ENCODE measurements at regions of chr14 and their contacts with region 1.

Region 1: GRCh38 chr14:88562831-88563686 is at the start of gene ZC3H14:
- DNase-seq: peak; percentile 86 to 88 (median 87)
- ATAC-seq: peak; percentile 96
- H3K4me3 ChIP-seq: peak within 1 kb of the TSS; percentile 90
- H3K27ac ChIP-seq: peak within 1 kb of the TSS; percentile 87
- H3K4me1 ChIP-seq: peaks cover 0 to 6% of the 10 kb centered on the region in 2 experiments; a peak in 4 of 5 replicates
- H3K27me3 ChIP-seq: no peaks in the 10 kb centered on the region
- CTCF ChIP-seq: no peak
- EP300 ChIP-seq: no peak
- POLR2A ChIP-seq: peak; percentile 82
- RAD21 ChIP-seq: no peak
- polyA plus RNA-seq, gene ZC3H14: 21.1 to 31.1 TPM

Region 2: GRCh38 chr14:87992718-87993628 is 570.1 kb before region 1 on chr14 and contains the start of gene GALC:
- CTCF ChIA-PET with region 1: no interaction called
- POLR2A ChIA-PET with region 1: no interaction called
- in situ Hi-C with region 1: loop called (anchors 25 kb)
- intact Hi-C with region 1: no loop called
- DNase-seq: peak; percentile 78 to 92 (median 80)
- ATAC-seq: peak; percentile 93
- H3K4me3 ChIP-seq: peak within 1 kb of the TSS; percentile 61
- H3K27ac ChIP-seq: peak within 1 kb of the TSS; percentile 69
- H3K4me1 ChIP-seq: peaks cover 13 to 31% of the 10 kb centered on the region in 2 experiments
- H3K27me3 ChIP-seq: no peaks in the 10 kb centered on the region
- CTCF ChIP-seq: peak in 1 of 3 experiments; percentile 16; a peak in 1 of 6 replicates
- EP300 ChIP-seq: peak; percentile 33; the same call in 1 of the 2 replicates
- POLR2A ChIP-seq: peak; percentile 67
- RAD21 ChIP-seq: peak in 1 of 2 experiments; percentile 9; a peak in 1 of 4 replicates
- polyA plus RNA-seq, gene GALC: 1.6 to 2.9 TPM

Region 3: DNA sequence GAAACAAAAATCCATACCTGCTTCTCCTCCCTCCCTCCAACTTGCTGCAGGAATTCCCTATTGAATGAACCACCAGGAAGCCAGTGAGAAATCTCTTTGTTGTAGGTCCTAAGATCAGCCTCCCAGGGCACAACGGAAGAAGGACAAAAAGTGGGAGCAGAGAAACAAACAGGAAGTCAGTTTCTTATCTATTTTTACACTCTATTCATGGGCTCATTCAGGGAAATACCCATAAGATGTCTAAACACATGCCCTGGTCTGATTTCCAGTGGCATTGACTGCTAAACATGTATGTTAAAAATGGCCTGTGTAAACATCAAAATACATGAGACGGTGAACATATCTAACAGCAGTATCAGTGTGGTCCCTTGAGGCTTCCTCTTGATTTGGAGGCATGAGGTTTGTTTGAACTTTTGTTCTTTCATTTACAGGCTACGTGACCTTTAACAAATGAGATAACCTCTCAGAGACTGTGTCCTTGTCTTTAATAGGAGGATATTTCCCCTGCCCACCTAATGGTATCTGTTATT is 539.3 kb before region 1 on chr14:
- CTCF ChIA-PET with region 1: no interaction called
- POLR2A ChIA-PET with region 1: no interaction called
- in situ Hi-C with region 1: no loop called
- intact Hi-C with region 1: loop called (anchors 5 kb)
- DNase-seq: peak in 2 of 4 experiments; percentile 7 to 21
- ATAC-seq: peak; percentile 63
- H3K4me3 ChIP-seq: no peak overlapping the region
- H3K27ac ChIP-seq: peak overlapping the region; percentile 36; the same call in 1 of the 3 replicates
- H3K4me1 ChIP-seq: peaks cover 0 to 40% of the 10 kb centered on the region in 2 experiments; a peak in 3 of 5 replicates
- H3K27me3 ChIP-seq: no peaks in the 10 kb centered on the region
- CTCF ChIP-seq: no peak
- EP300 ChIP-seq: peak; percentile 22; the same call in 1 of the 2 replicates
- POLR2A ChIP-seq: no peak
- RAD21 ChIP-seq: no peak

Region 4: DNA sequence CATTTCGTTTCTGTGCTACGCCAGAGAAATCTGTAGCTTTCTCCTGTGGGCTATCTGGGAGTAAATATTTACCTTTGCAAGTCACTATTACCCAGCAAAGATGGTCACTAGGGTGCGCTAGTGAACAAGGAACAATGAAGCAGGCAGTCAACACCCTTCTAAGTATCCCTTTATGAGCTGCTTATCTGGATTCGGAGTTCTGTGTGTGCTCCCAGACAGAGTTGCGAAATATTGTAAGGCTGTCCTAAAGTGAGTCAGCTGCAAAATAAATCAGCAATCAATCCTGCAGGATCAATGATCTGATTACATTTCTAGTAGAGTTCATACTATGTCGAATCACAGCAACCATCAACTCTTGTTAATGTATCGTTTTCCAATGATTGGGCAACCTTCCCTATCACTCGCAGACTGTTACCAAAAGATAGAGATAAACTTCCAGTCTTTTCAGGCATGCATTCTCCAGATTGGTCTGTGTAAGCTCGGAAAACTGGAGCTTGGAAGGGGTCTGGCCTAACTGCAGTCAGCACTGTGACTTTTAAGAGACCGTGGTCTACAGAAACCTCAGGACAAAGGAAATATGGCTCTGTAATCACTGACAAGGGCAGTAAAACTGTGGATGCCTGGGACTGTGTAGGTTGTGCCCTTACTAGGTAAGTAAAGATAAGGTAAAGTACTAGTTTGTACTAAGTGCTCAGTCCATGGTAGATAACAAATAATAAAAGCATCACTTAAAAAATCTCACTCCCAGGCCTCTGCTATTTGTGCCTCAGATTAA is 373.5 kb before region 1 on chr14:
- CTCF ChIA-PET with region 1: no interaction called
- POLR2A ChIA-PET with region 1: no interaction called
- in situ Hi-C with region 1: no loop called
- intact Hi-C with region 1: loop called (anchors 5 kb)
- DNase-seq: peak; percentile 26 to 80 (median 43)
- ATAC-seq: peak; percentile 96
- H3K4me3 ChIP-seq: no peak overlapping the region
- H3K27ac ChIP-seq: no peak overlapping the region
- H3K4me1 ChIP-seq: no peaks in the 10 kb centered on the region
- H3K27me3 ChIP-seq: peaks cover 5 to 24% of the 10 kb centered on the region in 2 experiments; a peak in 3 of 5 replicates
- CTCF ChIP-seq: peak; percentile 54 to 75 (median 59); a peak in 5 of 6 replicates
- EP300 ChIP-seq: no peak
- POLR2A ChIP-seq: no peak
- RAD21 ChIP-seq: peak; percentile 42 to 74

Region 5: GRCh38 chr14:88492272-88493089 is 70.6 kb before region 1 on chr14:
- CTCF ChIA-PET with region 1: interaction called, 4 read pairs
- POLR2A ChIA-PET with region 1: no interaction called
- in situ Hi-C with region 1: no loop called
- intact Hi-C with region 1: loop called (anchors 1 kb)
- DNase-seq: peak; percentile 64 to 75 (median 71)
- ATAC-seq: peak; percentile 95
- H3K4me3 ChIP-seq: no peak overlapping the region
- H3K27ac ChIP-seq: no peak overlapping the region
- H3K4me1 ChIP-seq: no peaks in the 10 kb centered on the region; a peak in 1 of 5 replicates
- H3K27me3 ChIP-seq: no peaks in the 10 kb centered on the region
- CTCF ChIP-seq: peak; percentile 65 to 71 (median 69)
- EP300 ChIP-seq: no peak
- POLR2A ChIP-seq: no peak
- RAD21 ChIP-seq: peak; percentile 46 to 72

Region 6: DNA sequence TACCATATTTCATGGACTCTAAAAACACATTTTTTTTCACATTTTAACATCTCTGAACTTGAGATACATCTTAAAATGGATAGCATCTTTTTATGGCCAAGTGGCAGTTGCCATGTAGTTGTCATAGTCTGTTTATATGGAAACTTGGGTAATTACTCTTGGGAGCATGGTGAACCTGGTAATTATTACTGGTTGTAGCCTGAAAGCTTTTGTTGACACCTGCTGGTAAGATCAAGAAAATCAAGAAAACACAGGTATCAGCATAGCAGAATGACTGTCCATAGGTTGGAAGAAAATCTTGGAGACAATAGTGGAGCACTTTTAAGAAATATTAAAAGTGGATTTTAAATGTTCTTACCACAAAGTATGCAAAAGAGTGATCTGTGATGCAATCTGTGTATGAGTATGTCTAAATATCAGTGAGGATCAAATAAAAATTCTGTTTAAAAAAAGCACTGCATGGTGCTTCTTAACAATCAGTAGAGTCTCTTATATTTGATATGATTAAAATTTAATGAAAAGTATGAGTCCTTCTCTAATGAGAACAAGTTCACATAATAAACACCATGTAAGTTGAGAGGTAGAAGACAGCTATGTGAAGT is 305.6 kb after region 1 on chr14:
- CTCF ChIA-PET with region 1: interaction called, 11 read pairs
- POLR2A ChIA-PET with region 1: no interaction called
- in situ Hi-C with region 1: no loop called
- intact Hi-C with region 1: no loop called
- DNase-seq: peak in 2 of 4 experiments; percentile 5 to 27
- ATAC-seq: peak; percentile 75
- H3K4me3 ChIP-seq: no peak overlapping the region
- H3K27ac ChIP-seq: no peak overlapping the region
- H3K4me1 ChIP-seq: no peaks in the 10 kb centered on the region
- H3K27me3 ChIP-seq: no peaks in the 10 kb centered on the region
- CTCF ChIP-seq: peak; percentile 22 to 63 (median 32); a peak in 3 of 6 replicates
- EP300 ChIP-seq: no peak
- POLR2A ChIP-seq: no peak
- RAD21 ChIP-seq: peak; percentile 52 to 75

Measured in K562 (cell line).